Activated B cell treated with CpG ODN at 0.5 μM for 24 hours (primary cell): ENCODE measurements at regions of chr2 and their contacts with region 1.

Region 1: GRCh38 chr2:16960579-16960978 is 294.9 kb upstream of the CYRIA start:
- DNase-seq: no peak
- ATAC-seq: peak; percentile 81
- H3K4me3 Mint-ChIP-seq: peak overlapping the region; percentile 64
- H3K27ac Mint-ChIP-seq: peak overlapping the region; percentile 88
- H3K4me1 Mint-ChIP-seq: peaks cover 48% of the 10 kb centered on the region
- H3K27me3 Mint-ChIP-seq: no peaks in the 10 kb centered on the region
- CTCF ChIP-seq: no peak

Region 2: GRCh38 chr2:16948053-16948452 is 12.5 kb before region 1 on chr2:
- CTCF ChIA-PET with region 1: no interaction called
- POLR2A ChIA-PET with region 1: interaction called, 7 read pairs
- intact Hi-C with region 1: loop called (anchors 1 kb)
- DNase-seq: no peak
- ATAC-seq: peak; percentile 83
- H3K4me3 Mint-ChIP-seq: peak overlapping the region; percentile 45
- H3K27ac Mint-ChIP-seq: peak overlapping the region; percentile 78
- H3K4me1 Mint-ChIP-seq: peaks cover 33% of the 10 kb centered on the region
- H3K27me3 Mint-ChIP-seq: no peaks in the 10 kb centered on the region
- CTCF ChIP-seq: no peak

Region 3: GRCh38 chr2:17208511-17208910 is 247.9 kb after region 1 on chr2:
- CTCF ChIA-PET with region 1: no interaction called
- POLR2A ChIA-PET with region 1: interaction called, 6 read pairs
- intact Hi-C with region 1: loop called (anchors 2 kb)
- DNase-seq: no peak
- ATAC-seq: no peak
- H3K4me3 Mint-ChIP-seq: no peak overlapping the region
- H3K27ac Mint-ChIP-seq: no peak overlapping the region
- H3K4me1 Mint-ChIP-seq: peaks cover 33% of the 10 kb centered on the region
- H3K27me3 Mint-ChIP-seq: no peaks in the 10 kb centered on the region
- CTCF ChIP-seq: no peak

Region 4: GRCh38 chr2:18178736-18179349 is 1218.3 kb after region 1 on chr2:
- CTCF ChIA-PET with region 1: no interaction called
- POLR2A ChIA-PET with region 1: no interaction called
- intact Hi-C with region 1: no loop called
- DNase-seq: no peak
- ATAC-seq: peak; percentile 40
- H3K4me3 Mint-ChIP-seq: no peak overlapping the region
- H3K27ac Mint-ChIP-seq: no peak overlapping the region
- H3K4me1 Mint-ChIP-seq: no peaks in the 10 kb centered on the region
- H3K27me3 Mint-ChIP-seq: peaks cover 5% of the 10 kb centered on the region
- CTCF ChIP-seq: peak; percentile 23